ENCODE measurements at regions of chr1 and their contacts with region 1.

Region 1: DNA sequence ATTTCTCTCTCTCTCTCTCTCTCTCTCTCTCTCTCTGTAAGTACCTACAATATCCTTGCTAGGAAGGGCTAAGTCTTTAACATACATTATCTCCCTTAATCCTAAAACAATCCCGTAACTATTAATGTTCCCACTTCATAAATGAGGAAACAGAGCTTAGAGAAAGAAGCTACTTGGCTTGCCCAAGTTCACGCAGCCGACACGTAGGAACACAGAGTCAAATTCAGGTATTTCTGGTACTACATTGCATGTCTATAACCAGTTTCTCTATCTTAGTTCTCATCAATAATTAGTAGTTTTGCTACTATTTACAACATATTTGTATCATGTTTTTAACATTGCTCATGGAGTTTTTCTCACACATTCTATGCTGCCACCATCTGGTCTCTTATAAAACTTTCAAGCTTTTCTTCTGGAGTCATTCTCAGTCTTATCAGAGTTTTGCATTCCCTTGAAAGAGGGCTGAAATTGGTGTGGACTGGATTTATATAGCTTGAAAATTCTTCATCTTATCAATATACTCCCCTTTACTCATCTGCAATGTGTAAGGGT is 118.9 kb upstream of the PALMD start:
- DNase-seq: no peak
- CTCF ChIP-seq: no peak

Region 2: GRCh38 chr1:99326215-99326949 is 200.6 kb before region 1 on chr1:
- CTCF ChIA-PET with region 1: no interaction called
- POLR2A ChIA-PET with region 1: no interaction called
- DNase-seq: no peak
- CTCF ChIP-seq: no peak

Region 3: DNA sequence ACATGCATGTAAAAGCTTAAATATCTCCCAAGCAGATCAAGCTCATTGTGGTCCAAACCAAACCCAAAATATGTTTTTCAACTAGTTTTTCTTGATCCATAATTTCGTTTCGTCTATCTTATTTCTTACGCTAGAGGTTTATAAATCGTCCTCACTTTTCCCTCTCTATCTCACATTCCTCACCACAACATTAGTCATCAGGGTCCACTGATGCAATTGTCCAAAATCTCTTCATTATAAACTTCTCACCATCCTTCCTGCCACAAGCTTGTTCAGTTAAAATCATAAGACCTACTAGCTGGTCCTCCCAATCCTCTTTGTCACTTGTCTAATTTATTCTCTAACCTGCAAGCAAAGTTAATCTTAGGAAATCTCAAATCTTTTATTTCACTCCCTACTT is 54.1 kb before region 1 on chr1:
- CTCF ChIA-PET with region 1: no interaction called
- POLR2A ChIA-PET with region 1: no interaction called
- DNase-seq: no peak
- CTCF ChIP-seq: no peak

Region 4: DNA sequence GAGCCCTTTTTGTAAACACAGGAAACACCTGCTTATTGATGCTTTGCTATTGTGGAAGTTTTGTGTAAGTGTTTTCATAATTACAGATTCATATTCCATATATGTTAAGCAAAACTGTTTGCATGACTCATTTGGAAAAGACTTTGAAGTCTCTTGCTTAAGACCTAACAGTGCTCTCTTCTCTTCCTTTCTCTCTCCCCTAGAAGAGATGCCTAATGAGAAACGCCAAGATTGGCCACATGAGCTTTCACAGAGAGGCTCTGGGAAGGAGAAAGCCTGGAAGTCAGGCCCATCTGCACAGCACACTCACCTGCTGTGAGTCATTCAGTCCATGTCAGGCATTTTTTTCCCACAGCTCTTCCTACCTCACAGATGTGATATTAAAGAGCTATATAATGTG is 17.3 kb after region 1 on chr1:
- CTCF ChIA-PET with region 1: interaction called, 10 read pairs
- POLR2A ChIA-PET with region 1: no interaction called
- DNase-seq: no peak
- CTCF ChIP-seq: no peak

Measured in GM10248 (cell line).